Caco-2 (cell line): ENCODE measurements at regions of chr10 and their contacts with region 1.

Region 1: DNA sequence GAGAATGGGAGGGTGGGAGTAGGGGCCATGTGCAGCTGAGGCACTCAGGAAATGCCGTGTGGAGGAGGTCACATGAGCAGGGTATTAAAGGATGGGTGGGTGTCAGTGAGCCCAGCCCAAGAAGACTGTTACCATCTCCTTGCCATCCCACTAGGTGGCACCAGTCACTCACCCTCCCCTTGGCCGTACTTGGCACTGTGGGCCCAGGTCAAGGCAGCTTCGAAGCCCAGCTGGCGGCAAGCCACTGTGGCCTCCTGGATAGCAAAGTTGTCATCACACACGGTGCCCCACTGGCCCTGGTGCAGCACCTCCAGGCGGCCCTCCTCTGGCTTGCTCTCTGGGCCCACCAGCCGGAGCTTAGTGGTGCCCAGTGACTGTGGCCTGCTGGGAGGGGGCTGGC is 5.4 kb downstream of the LOXL4 start:
- DNase-seq: peak in 1 of 2 experiments; percentile 30
- H3K4me3 ChIP-seq: no peak overlapping the region
- H3K4me3 Mint-ChIP-seq: no peak overlapping the region
- H3K27ac Mint-ChIP-seq: no peak overlapping the region
- H3K4me1 ChIP-seq: peaks cover 3% of the 10 kb centered on the region; the same call in 1 of the 2 replicates
- H3K4me1 Mint-ChIP-seq: peaks cover 24% of the 10 kb centered on the region
- H3K27me3 ChIP-seq: no peaks in the 10 kb centered on the region
- H3K27me3 Mint-ChIP-seq: no peaks in the 10 kb centered on the region
- CTCF ChIP-seq: no peak

Region 2: DNA sequence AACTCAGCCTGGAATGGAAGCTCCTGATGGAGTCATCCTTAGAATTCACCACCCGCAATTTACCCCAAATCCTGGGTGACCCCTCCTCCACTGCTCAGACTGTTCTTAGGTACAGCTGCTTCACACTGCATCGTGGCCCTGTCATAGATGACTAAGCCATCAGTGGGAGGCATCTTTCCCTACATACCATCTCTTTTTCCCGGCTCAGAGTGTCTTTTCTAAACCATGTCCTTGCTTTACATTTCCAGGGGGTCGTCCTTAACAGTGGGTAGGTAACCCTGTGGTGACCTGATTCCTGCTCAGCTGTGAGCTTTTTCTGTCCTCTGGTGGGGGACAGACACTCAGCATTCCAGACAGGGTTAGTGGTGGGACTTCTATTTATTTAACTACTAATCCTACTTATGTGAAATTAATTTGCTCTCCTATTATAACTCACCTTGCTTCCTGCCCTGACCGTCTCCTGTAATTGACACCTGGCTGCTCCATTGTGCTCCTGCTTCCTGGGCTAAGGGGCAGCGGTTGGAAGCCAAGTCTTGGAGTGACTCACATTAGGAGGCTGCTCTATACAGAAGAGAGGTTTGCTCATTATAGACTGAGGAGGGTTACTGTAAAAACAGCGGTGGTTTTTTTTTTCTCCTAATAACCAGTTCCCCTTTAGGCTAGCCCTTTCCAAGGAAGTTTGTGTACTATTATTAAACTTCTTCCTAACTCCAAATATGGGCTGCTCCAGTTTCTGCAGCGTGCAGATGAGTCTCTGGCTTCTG is 111.8 kb after region 1 on chr10:
- CTCF ChIA-PET with region 1: no interaction called
- POLR2A ChIA-PET with region 1: no interaction called
- intact Hi-C with region 1: no loop called
- DNase-seq: no peak
- H3K4me3 ChIP-seq: no peak overlapping the region
- H3K4me3 Mint-ChIP-seq: no peak overlapping the region
- H3K27ac Mint-ChIP-seq: no peak overlapping the region
- H3K4me1 ChIP-seq: no peaks in the 10 kb centered on the region
- H3K4me1 Mint-ChIP-seq: no peaks in the 10 kb centered on the region
- H3K27me3 ChIP-seq: no peaks in the 10 kb centered on the region
- H3K27me3 Mint-ChIP-seq: peaks cover 19% of the 10 kb centered on the region
- CTCF ChIP-seq: no peak

Region 3: GRCh38 chr10:98414932-98415730 is 152.6 kb after region 1 on chr10 and contains the start of gene PYROXD2:
- CTCF ChIA-PET with region 1: no interaction called
- POLR2A ChIA-PET with region 1: no interaction called
- intact Hi-C with region 1: loop called (anchors 10 kb)
- DNase-seq: peak; percentile 81 to 89
- H3K4me3 ChIP-seq: peak within 1 kb of the TSS; percentile 54
- H3K4me3 Mint-ChIP-seq: peak within 1 kb of the TSS; percentile 83
- H3K27ac Mint-ChIP-seq: peak within 1 kb of the TSS; percentile 89
- H3K4me1 ChIP-seq: peaks cover 5% of the 10 kb centered on the region
- H3K4me1 Mint-ChIP-seq: no peaks in the 10 kb centered on the region
- H3K27me3 ChIP-seq: no peaks in the 10 kb centered on the region
- H3K27me3 Mint-ChIP-seq: no peaks in the 10 kb centered on the region
- CTCF ChIP-seq: no peak
- total RNA-seq, gene PYROXD2: 2.2 and 4.9 TPM in 2 replicates